GM10248 (cell line): ENCODE measurements at regions of chr9 and their contacts with region 1.

Region 1: DNA sequence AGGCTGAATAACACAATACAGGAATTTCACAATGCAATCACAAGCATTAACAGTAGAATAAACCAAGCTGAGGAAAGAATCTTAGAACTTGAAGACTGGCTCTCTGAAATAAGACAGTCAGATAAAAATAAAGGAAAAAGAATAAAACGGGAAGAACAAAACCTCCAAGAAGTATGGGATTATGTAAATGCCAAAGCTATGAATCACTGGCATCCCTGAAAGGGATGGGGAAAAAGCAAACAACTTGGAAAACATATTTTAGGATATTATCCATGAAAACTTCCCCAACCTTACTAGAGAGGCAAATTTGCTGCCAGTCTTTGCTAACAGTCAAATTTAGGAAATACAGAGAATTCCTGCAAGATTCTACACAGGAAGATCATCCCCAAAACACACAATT is 157.9 kb downstream of the ALDH1A1 start:
- DNase-seq: no peak
- CTCF ChIP-seq: no peak

Region 2: GRCh38 chr9:72807765-72808445 is 13.0 kb after region 1 on chr9:
- CTCF ChIA-PET with region 1: interaction called, 11 read pairs
- POLR2A ChIA-PET with region 1: no interaction called
- DNase-seq: peak; percentile 8
- CTCF ChIP-seq: no peak